RWPE1 (cell line): ENCODE measurements at regions of chr6 and their contacts with region 1.

Region 1: GRCh38 chr6:119077643-119078375 is 655 bp downstream of the FAM184A start:
- DNase-seq: peak; percentile 36
- H3K27ac ChIP-seq: no peak overlapping the region
- CTCF ChIP-seq: no peak

Region 2: GRCh38 chr6:118952683-118953082 is 125.1 kb before region 1 on chr6:
- CTCF ChIA-PET with region 1: interaction called, 11 read pairs
- POLR2A ChIA-PET with region 1: no interaction called
- DNase-seq: no peak
- H3K27ac ChIP-seq: no peak overlapping the region
- CTCF ChIP-seq: no peak